Gastrocnemius medialis (tissue), 4 donors: ENCODE measurements at regions of chr9 and their contacts with region 1.

Region 1: GRCh38 chr9:4679268-4680172 is at the start of gene CDC37L1:
- DNase-seq: peak; percentile 95 to 96
- ATAC-seq: peak; percentile 76 to 84
- H3K4me3 ChIP-seq: peak within 1 kb of the TSS; percentile 81 to 98 (median 88)
- H3K27ac ChIP-seq: peak within 1 kb of the TSS; percentile 91 to 99 (median 95)
- H3K4me1 ChIP-seq: peaks cover 40 to 44% of the 10 kb centered on the region in 2 donors
- H3K27me3 ChIP-seq: no peaks in the 10 kb centered on the region
- CTCF ChIP-seq: peak; percentile 72 to 88 (median 81)
- POLR2A ChIP-seq: peak; percentile 98 to 99
- total RNA-seq, gene CDC37L1: 91.1 to 157 (median 131) TPM

Region 2: GRCh38 chr9:4366591-4367330 is 312.8 kb before region 1 on chr9:
- in situ Hi-C with region 1: no loop called
- intact Hi-C with region 1: no loop called
- DNase-seq: peak in 1 of 2 donors; percentile 14
- ATAC-seq: peak in 1 of 2 donors; percentile 41
- H3K4me3 ChIP-seq: no peak overlapping the region
- H3K27ac ChIP-seq: no peak overlapping the region
- H3K4me1 ChIP-seq: no peaks in the 10 kb centered on the region
- H3K27me3 ChIP-seq: no peaks in the 10 kb centered on the region
- CTCF ChIP-seq: peak; percentile 9 to 63 (median 56)
- POLR2A ChIP-seq: no peak

Region 3: GRCh38 chr9:4662108-4662988 is 17.2 kb before region 1 on chr9 and contains the start of gene PLPP6:
- in situ Hi-C with region 1: no loop called
- intact Hi-C with region 1: loop called (anchors 1 kb)
- DNase-seq: peak; percentile 78 to 84
- ATAC-seq: peak; percentile 95 to 96
- H3K4me3 ChIP-seq: peak within 1 kb of the TSS; percentile 66 to 87 (median 76)
- H3K27ac ChIP-seq: peak within 1 kb of the TSS; percentile 70 to 83 (median 77)
- H3K4me1 ChIP-seq: peaks cover 19 to 26% of the 10 kb centered on the region in 2 donors
- H3K27me3 ChIP-seq: no peaks in the 10 kb centered on the region
- CTCF ChIP-seq: peak; percentile 15 to 71 (median 57)
- POLR2A ChIP-seq: peak; percentile 16 to 51
- total RNA-seq, gene PLPP6: 2.5 to 3.1 (median 2.5) TPM

Region 4: DNA sequence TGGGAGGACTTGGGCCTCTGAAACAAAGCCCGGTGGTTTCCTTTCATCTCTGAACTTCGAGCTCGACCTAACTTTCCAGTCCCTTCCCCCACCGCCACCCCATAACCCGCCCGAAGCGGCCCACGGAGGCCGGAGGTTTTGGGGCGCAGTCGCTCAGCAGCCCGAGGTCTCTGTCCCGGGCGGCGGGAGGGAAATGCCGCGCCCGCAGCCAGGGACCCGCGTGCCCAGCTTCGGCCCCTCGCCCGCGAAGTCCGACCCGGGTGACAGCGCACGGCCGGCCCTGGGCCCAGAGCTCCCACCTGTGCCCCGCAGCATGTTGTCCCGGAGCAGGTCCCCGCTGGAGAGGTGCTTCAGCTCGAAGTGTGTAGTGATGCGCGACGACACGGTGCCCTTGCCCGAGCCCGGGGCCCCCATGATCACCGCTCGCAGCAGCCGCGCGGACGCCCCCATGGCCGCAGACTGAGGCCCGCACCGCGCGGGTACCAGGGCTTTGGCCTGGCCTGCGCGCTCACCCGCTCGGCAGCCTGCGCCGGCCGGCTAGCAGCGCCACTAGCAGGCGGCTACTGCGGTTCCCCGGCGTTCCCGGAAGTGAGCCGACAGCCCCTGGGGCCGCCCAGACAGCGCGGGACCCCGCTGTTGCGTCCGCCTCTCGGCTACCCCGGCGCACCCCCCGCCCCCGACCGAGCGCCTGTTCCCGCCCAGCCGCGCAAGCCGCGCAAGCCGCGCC is 61.3 kb after region 1 on chr9 and contains the start of gene AK3:
- in situ Hi-C with region 1: loop called in 1 of 4 experiments (anchors 10 kb)
- intact Hi-C with region 1: loop called (anchors 1 kb)
- DNase-seq: peak; percentile 77 to 80
- ATAC-seq: peak; percentile 77
- H3K4me3 ChIP-seq: peak within 1 kb of the TSS; percentile 83 to 89 (median 86)
- H3K27ac ChIP-seq: peak within 1 kb of the TSS; percentile 87 to 95 (median 92)
- H3K4me1 ChIP-seq: peaks cover 21% of the 10 kb centered on the region in 2 donors
- H3K27me3 ChIP-seq: no peaks in the 10 kb centered on the region
- CTCF ChIP-seq: peak in 4 of 5 experiments; percentile 7 to 48 (median 20)
- POLR2A ChIP-seq: peak; percentile 89
- total RNA-seq, gene AK3: 163 to 270 (median 188) TPM

Region 5: DNA sequence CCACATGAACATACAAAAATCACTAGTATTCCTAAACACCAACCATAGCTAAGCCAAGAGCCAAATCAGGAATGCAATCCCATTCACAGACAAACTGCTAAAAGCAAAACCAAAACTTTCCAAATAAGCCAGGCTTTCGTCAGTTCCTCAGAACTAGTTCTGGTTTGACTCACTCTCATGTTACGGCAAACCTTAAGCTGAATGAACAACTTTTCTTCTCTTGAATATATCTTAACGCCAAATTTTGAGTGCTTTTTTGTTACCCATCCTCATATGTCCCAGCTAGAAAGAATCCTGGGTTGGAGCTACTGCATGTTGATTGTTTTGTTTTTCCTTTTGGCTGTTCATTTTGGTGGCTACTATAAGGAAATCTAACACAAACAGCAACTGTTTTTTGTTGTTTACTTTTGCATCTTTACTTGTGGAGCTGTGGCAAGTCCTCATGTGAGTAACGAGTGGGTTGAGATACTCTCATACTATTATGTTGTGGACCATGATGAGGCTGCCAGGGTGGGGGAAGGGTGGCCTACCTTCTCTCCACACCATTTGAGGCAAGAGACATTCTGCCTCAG is 830.9 kb after region 1 on chr9 and contains the start of gene PDCD1LG2:
- in situ Hi-C with region 1: no loop called
- intact Hi-C with region 1: loop called (anchors 10 kb)
- DNase-seq: no peak
- ATAC-seq: peak; percentile 37 to 64
- H3K4me3 ChIP-seq: peak within 1 kb of the TSS; percentile 37 to 41 (median 40)
- H3K27ac ChIP-seq: peak within 1 kb of the TSS; percentile 55 to 74 (median 66)
- H3K4me1 ChIP-seq: peaks cover 18 to 27% of the 10 kb centered on the region in 2 donors
- H3K27me3 ChIP-seq: no peaks in the 10 kb centered on the region
- CTCF ChIP-seq: no peak
- POLR2A ChIP-seq: peak in 1 of 2 donors; percentile 20
- total RNA-seq, gene PDCD1LG2: 1.4 to 2.5 (median 1.7) TPM